Pancreas (tissue), 10 donors: ENCODE measurements at regions of chr4 and their contacts with region 1.

Region 1: DNA sequence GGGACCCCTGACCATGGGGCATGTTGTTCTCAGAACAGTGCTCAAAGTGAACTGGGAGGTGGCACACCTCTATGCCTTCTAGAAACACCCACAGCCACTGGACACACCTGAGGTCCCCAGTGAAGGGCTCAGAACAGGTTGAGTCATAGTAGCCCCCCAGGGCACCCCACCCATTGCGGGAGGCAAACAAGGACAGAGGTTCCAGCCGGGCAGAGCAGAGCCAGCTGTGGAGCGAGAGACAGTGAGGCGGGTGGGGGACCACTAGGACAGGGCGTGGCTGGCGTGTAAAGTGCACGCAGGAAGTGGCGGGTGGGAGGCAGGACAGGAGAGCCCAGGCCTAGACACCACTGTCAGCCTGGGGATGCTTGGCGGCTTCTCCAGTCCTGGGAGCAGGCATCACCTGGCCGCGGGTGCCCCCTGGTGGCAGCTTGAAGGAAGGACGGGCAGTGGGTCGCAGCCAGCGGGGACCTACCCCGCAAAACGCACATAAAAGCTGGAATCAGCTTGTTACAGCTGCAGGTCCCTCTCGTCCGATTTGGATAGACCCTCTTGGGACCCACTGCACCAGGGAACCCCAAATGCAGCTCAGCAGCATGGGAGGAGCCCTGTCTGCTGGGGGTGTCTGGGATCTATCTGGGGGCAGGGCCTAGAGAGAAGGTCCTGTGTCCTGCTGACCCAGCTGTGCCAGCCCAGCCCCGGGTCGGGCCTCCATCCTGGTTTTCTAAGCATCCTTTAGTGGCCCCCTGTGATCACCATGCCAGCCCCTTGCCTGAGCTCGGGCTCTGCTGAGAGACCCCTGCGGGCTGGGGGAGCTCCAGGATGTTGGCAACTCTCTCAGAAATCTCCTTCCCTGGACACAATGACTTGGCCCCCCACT is 57.6 kb downstream of the WFS1 start:
- DNase-seq: peak; percentile 58 to 95 (median 80)
- ATAC-seq: peak; percentile 90 to 97 (median 92)
- H3K4me3 ChIP-seq: no peak overlapping the region
- H3K27ac ChIP-seq: no peak overlapping the region
- H3K4me1 ChIP-seq: no peaks in the 10 kb centered on the region
- H3K27me3 ChIP-seq: peaks cover 0 to 3% (median 0%) of the 10 kb centered on the region in 4 donors
- CTCF ChIP-seq: peak; percentile 96 to 98 (median 96)

Region 2: DNA sequence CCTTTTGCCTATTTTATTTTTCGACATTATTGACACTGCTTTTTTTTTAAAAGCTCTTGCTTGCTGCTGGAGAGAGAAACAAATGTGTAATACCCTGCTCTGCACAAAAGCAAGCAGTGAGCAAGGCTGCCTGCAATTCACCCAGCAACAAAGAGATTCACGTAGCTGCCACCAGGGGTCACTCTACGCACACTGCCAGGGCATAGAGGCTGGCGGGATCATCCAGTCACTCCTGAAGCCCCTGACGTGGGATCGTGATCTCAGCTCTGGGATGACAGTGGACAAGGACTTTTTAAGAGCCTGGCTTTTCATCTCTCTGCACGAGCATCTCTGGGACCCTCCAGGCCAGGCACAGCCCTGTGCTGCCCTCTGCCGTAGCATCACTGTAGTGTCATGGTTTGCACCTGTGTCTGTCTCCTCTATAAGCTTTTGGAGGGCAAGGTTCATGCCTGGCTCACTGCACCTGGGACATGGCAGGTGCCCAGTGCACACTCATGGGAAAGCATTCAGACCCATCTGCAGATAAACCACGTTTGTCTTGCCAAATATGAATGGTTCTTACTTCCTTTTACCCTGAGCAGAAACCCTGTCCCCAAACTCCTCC is 328.8 kb before region 1 on chr4:
- intact Hi-C with region 1: loop called in 1 of 3 experiments (anchors 10 kb)
- DNase-seq: peak in 4 of 6 donors; percentile 32 to 61 (median 42)
- ATAC-seq: peak; percentile 70 to 95 (median 94)
- H3K4me3 ChIP-seq: no peak overlapping the region
- H3K27ac ChIP-seq: no peak overlapping the region
- H3K4me1 ChIP-seq: no peaks in the 10 kb centered on the region
- H3K27me3 ChIP-seq: no peaks in the 10 kb centered on the region
- CTCF ChIP-seq: peak; percentile 74 to 91 (median 84)

Region 3: DNA sequence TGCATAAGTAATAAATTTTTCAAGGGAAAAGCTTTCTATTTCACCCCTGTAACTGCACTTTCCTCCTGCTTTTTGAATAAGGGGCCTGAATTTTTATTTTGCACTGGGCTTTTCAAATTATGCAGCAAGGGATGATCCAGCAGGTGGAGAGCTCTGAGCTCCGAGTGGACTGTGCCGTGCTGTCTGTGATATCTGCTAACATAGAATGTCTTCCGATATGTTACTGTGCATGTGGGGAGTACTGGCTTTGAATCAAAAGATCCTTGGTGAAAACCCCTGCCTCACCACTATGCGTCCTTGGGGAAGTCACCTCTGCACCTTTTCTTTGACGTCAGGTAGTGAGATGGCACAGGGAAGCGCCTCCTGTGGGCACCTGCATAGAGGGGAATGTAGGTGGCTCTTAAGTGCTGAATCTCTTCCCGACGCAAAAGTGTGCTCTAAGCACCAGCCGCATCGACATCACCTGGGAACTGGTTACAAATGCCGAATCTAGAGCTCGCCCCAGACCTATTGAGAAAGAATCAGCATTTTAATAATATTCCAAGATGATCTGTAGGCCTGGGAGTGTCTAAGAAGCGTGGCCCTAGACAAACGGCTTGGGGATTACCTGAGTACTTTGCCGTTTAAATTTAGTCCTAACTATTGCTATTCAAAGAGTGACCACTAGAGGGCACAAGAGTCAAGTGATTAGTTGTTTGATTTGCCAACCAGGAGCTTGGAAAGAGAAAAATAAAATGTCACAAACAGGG is 76.9 kb before region 1 on chr4:
- intact Hi-C with region 1: loop called in 2 of 3 experiments (anchors 2 to 5 kb)
- DNase-seq: peak in 1 of 6 donors; percentile 22
- ATAC-seq: peak; percentile 70 to 95 (median 88)
- H3K4me3 ChIP-seq: no peak overlapping the region
- H3K27ac ChIP-seq: no peak overlapping the region
- H3K4me1 ChIP-seq: no peaks in the 10 kb centered on the region
- H3K27me3 ChIP-seq: peaks cover 0 to 30% (median 3%) of the 10 kb centered on the region in 4 donors
- CTCF ChIP-seq: peak; percentile 63 to 80 (median 72)

Region 4: GRCh38 chr4:6546681-6547447 is 219.6 kb after region 1 on chr4:
- intact Hi-C with region 1: loop called in 1 of 3 experiments (anchors 5 kb)
- DNase-seq: peak in 3 of 6 donors; percentile 24 to 37 (median 31)
- ATAC-seq: peak in 3 of 4 donors; percentile 80 to 91 (median 83)
- H3K4me3 ChIP-seq: no peak overlapping the region
- H3K27ac ChIP-seq: no peak overlapping the region
- H3K4me1 ChIP-seq: no peaks in the 10 kb centered on the region
- H3K27me3 ChIP-seq: no peaks in the 10 kb centered on the region
- CTCF ChIP-seq: peak; percentile 40 to 83 (median 72)